Activated CD4-positive, alpha-beta memory T cell treated with anti-CD3 and anti-CD28 coated beads for 36 hours (primary cell): ENCODE measurements at regions of chr4 and their contacts with region 1.

Region 1: GRCh38 chr4:159206427-159206871 is 103.6 kb downstream of the RAPGEF2 start:
- DNase-seq: peak; percentile 74
- H3K4me3 Mint-ChIP-seq: peak overlapping the region; percentile 49
- H3K27ac Mint-ChIP-seq: peak overlapping the region; percentile 91
- H3K4me1 Mint-ChIP-seq: peaks cover 54% of the 10 kb centered on the region
- H3K27me3 Mint-ChIP-seq: no peaks in the 10 kb centered on the region

Region 2: GRCh38 chr4:158671915-158672806 is 534.3 kb before region 1 on chr4 and contains the start of gene ETFDH:
- CTCF ChIA-PET with region 1: no interaction called
- POLR2A ChIA-PET with region 1: no interaction called
- intact Hi-C with region 1: loop called (anchors 1 kb)
- DNase-seq: peak; percentile 99
- H3K4me3 Mint-ChIP-seq: peak within 1 kb of the TSS; percentile 99
- H3K27ac Mint-ChIP-seq: peak within 1 kb of the TSS; percentile 93
- H3K4me1 Mint-ChIP-seq: peaks cover 20% of the 10 kb centered on the region
- H3K27me3 Mint-ChIP-seq: no peaks in the 10 kb centered on the region
- total RNA-seq, gene ETFDH: 30.8 to 30.9 TPM

Region 3: GRCh38 chr4:158729716-158730559 is 476.5 kb before region 1 on chr4:
- CTCF ChIA-PET with region 1: interaction called, 3 read pairs
- POLR2A ChIA-PET with region 1: no interaction called
- intact Hi-C with region 1: loop called (anchors 1 kb)
- DNase-seq: peak; percentile 74
- H3K4me3 Mint-ChIP-seq: no peak overlapping the region
- H3K27ac Mint-ChIP-seq: no peak overlapping the region
- H3K4me1 Mint-ChIP-seq: peaks cover 32% of the 10 kb centered on the region
- H3K27me3 Mint-ChIP-seq: peaks cover 36% of the 10 kb centered on the region

Region 4: GRCh38 chr4:158850800-158851644 is 355.4 kb before region 1 on chr4:
- CTCF ChIA-PET with region 1: interaction called, 46 read pairs
- POLR2A ChIA-PET with region 1: no interaction called
- intact Hi-C with region 1: no loop called
- DNase-seq: no peak
- H3K4me3 Mint-ChIP-seq: no peak overlapping the region
- H3K27ac Mint-ChIP-seq: no peak overlapping the region
- H3K4me1 Mint-ChIP-seq: peaks cover 18% of the 10 kb centered on the region
- H3K27me3 Mint-ChIP-seq: no peaks in the 10 kb centered on the region

Region 5: DNA sequence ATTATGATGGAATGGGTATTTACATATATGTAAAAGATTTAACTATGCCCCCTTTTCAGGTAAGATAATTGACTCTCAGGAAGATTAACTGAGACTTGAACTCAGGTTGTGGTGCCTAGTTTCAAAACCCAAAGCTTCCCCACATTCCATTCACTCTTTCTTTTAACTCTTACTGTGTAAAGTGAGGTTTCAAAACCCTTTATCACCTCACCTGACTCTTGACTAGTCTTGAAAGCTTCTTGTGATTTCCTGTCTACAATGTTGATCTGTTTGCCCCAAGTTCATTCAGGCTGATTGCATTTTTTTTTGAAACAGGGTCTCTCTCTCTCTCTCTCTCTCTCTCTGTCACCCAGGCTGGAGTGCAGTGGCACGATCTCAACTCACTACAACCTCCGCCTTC is 144.1 kb before region 1 on chr4:
- CTCF ChIA-PET with region 1: no interaction called
- POLR2A ChIA-PET with region 1: no interaction called
- intact Hi-C with region 1: no loop called
- DNase-seq: no peak
- H3K4me3 Mint-ChIP-seq: no peak overlapping the region
- H3K27ac Mint-ChIP-seq: no peak overlapping the region
- H3K4me1 Mint-ChIP-seq: peaks cover 6% of the 10 kb centered on the region
- H3K27me3 Mint-ChIP-seq: peaks cover 4% of the 10 kb centered on the region

Region 6: GRCh38 chr4:159077702-159078495 is 128.6 kb before region 1 on chr4:
- CTCF ChIA-PET with region 1: interaction called, 3 read pairs
- POLR2A ChIA-PET with region 1: no interaction called
- intact Hi-C with region 1: loop called (anchors 1 kb)
- DNase-seq: no peak
- H3K4me3 Mint-ChIP-seq: no peak overlapping the region
- H3K27ac Mint-ChIP-seq: no peak overlapping the region
- H3K4me1 Mint-ChIP-seq: peaks cover 22% of the 10 kb centered on the region
- H3K27me3 Mint-ChIP-seq: no peaks in the 10 kb centered on the region

Region 7: DNA sequence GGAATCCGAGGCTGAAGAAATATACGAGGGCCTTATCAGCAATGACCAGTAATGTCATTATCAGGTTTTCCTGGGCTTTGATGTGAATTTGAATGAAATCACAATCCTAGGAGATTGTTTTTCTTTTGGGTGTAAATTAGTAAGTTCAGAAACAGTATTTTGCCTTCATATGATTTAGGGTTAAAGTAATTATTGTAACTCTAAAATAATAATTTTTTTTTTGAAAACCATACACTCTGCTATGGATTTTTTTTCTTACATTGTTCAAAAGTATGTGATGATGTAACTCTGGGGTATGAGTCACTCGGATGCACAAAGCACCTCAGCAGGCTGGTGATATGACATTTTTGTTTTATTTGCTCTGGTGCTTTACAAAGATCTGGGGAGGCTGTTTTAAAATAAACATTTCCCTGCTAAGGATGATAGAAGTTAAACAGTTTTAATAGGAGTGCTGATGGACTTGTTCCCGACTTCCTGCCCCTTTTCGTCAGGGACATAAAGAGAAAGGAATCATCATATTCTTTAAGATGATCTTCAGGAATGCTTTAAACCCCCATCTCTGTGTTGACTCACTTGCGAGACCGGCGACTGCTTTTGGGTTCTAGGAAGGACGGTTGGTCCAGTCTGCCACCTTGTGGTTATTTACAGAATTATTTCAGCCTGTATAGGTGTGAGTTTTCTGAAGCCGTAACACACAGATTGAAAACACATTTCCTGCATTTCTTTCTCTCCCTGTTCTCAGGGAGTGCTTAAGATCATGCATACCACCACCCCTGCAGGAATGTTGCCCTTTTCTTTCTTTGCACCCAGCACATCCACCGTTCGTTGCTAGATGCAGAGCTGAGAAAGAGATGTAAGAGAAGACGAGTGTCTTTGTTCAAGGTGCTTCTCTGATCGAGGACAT is 31.1 kb before region 1 on chr4:
- CTCF ChIA-PET with region 1: interaction called, 4 read pairs
- POLR2A ChIA-PET with region 1: no interaction called
- intact Hi-C with region 1: loop called (anchors 1 kb)
- DNase-seq: peak; percentile 69
- H3K4me3 Mint-ChIP-seq: no peak overlapping the region
- H3K27ac Mint-ChIP-seq: no peak overlapping the region
- H3K4me1 Mint-ChIP-seq: peaks cover 56% of the 10 kb centered on the region
- H3K27me3 Mint-ChIP-seq: no peaks in the 10 kb centered on the region

Region 8: GRCh38 chr4:159278399-159278798 is 72.0 kb after region 1 on chr4:
- CTCF ChIA-PET with region 1: no interaction called
- POLR2A ChIA-PET with region 1: no interaction called
- intact Hi-C with region 1: no loop called
- DNase-seq: no peak
- H3K4me3 Mint-ChIP-seq: no peak overlapping the region
- H3K27ac Mint-ChIP-seq: no peak overlapping the region
- H3K4me1 Mint-ChIP-seq: peaks cover 3% of the 10 kb centered on the region
- H3K27me3 Mint-ChIP-seq: no peaks in the 10 kb centered on the region

Region 9: DNA sequence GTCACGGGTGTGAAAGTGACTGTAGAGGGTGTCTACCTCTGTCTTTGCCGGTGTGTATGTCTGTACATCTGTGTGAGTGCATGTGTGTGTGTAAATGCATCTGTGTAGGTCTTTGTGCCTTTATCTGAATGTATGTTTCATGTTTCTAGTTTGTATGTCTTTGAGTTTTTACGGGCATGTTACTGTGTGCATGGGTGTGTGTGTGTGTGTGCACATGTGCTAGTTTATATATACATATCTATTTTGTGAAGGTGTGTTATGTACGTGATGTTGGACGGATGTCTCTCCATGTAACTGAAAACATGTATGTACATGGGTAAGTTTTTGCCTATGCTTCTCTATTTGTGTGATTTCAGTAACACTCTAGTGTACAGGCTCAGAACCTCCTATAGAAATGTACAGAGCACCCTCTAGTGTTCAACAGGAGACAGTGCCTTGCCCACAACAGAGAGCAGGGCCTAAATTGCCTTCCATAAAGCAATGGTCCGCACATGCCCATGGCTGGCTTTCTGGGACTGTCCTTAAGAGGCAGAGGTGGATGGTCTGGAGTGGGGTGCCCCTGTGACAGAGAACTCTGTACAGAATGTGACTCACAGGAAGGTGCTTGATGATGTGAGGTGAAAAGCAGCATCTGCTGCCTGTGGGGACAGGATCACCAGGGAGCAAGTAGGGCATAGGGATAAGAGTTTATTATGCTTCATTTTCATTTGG is 240.0 kb after region 1 on chr4:
- CTCF ChIA-PET with region 1: no interaction called
- POLR2A ChIA-PET with region 1: no interaction called
- intact Hi-C with region 1: loop called (anchors 2 kb)
- DNase-seq: peak; percentile 28
- H3K4me3 Mint-ChIP-seq: no peak overlapping the region
- H3K27ac Mint-ChIP-seq: no peak overlapping the region
- H3K4me1 Mint-ChIP-seq: no peaks in the 10 kb centered on the region
- H3K27me3 Mint-ChIP-seq: peaks cover 9% of the 10 kb centered on the region

Region 10: GRCh38 chr4:159577241-159577640 is 370.8 kb after region 1 on chr4:
- CTCF ChIA-PET with region 1: no interaction called
- POLR2A ChIA-PET with region 1: no interaction called
- intact Hi-C with region 1: no loop called
- DNase-seq: no peak
- H3K4me3 Mint-ChIP-seq: no peak overlapping the region
- H3K27ac Mint-ChIP-seq: no peak overlapping the region
- H3K4me1 Mint-ChIP-seq: no peaks in the 10 kb centered on the region
- H3K27me3 Mint-ChIP-seq: no peaks in the 10 kb centered on the region